Activated T-helper 1 cell treated with anti-CD3 and anti-CD28 coated beads, Interleukin-12 subunit alpha, Interleukin-12 subunit beta, Interleukin-2, Interleukin-4 antibody, amounts not matched to agents 30 ng/mL and 10 ng/mL and 1 ng/mL, durations not matched to agents 14 hours and 24 hours and 36 hours (primary cell): ENCODE measurements at regions of chr18 and their contacts with region 1.

Region 1: DNA sequence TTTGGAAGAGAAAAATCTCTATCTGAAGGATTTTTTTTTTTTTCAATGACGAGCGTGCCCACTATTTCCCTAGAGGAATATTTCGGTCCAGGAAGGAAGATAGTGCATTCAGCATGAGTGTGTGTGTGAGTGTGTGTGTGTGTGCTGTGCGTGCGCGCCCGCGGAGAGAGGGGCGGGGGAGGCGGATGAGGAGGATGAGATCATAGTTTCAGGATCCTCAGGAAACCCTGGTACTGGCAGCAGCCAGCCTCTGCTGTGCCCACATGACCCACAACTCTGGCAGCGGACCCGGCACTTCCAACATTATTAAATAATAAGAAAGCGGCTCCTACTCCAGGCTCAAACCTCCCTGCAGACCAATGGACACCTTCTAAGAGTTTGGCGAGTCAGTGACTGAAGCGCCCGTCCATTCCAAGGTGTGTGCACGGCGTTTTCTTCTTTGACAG is 217.0 kb upstream of the DTNA start:
- DNase-seq: no peak
- H3K4me3 Mint-ChIP-seq: peak overlapping the region; percentile 31
- H3K27ac Mint-ChIP-seq: no peak overlapping the region
- H3K4me1 Mint-ChIP-seq: peaks cover 4% of the 10 kb centered on the region
- H3K27me3 Mint-ChIP-seq: peaks cover 34% of the 10 kb centered on the region

Region 2: GRCh38 chr18:34224423-34225217 is 268.5 kb before region 1 on chr18 and contains the start of gene NOL4:
- intact Hi-C with region 1: loop called (anchors 10 kb)
- DNase-seq: no peak
- H3K4me3 Mint-ChIP-seq: no peak within 1 kb of the TSS
- H3K27ac Mint-ChIP-seq: no peak within 1 kb of the TSS
- H3K4me1 Mint-ChIP-seq: peaks cover 4% of the 10 kb centered on the region
- H3K27me3 Mint-ChIP-seq: peaks cover 35% of the 10 kb centered on the region
- total RNA-seq, gene NOL4: not detected in 2 replicates

Region 3: DNA sequence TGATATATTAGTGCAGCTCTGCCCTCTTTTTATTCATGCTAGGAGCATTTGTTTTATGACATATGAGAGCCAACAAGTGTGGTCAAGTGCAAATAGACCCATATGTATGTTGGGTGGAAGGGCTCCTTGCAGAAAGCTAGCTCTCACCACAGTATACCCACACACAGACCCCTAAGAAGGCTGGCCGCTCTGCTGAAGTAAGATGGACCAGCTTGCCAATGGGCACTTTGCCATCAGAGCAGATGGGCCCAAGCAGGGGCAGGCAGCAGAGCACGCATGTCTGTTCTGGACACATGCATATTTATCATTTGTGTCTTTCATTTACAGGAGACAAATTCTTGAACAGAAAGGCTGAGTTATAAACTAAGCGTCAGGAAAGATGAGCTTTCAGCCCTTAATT is 29.5 kb after region 1 on chr18:
- intact Hi-C with region 1: no loop called
- DNase-seq: no peak
- H3K4me3 Mint-ChIP-seq: no peak overlapping the region
- H3K27ac Mint-ChIP-seq: no peak overlapping the region
- H3K4me1 Mint-ChIP-seq: no peaks in the 10 kb centered on the region
- H3K27me3 Mint-ChIP-seq: no peaks in the 10 kb centered on the region

Region 4: DNA sequence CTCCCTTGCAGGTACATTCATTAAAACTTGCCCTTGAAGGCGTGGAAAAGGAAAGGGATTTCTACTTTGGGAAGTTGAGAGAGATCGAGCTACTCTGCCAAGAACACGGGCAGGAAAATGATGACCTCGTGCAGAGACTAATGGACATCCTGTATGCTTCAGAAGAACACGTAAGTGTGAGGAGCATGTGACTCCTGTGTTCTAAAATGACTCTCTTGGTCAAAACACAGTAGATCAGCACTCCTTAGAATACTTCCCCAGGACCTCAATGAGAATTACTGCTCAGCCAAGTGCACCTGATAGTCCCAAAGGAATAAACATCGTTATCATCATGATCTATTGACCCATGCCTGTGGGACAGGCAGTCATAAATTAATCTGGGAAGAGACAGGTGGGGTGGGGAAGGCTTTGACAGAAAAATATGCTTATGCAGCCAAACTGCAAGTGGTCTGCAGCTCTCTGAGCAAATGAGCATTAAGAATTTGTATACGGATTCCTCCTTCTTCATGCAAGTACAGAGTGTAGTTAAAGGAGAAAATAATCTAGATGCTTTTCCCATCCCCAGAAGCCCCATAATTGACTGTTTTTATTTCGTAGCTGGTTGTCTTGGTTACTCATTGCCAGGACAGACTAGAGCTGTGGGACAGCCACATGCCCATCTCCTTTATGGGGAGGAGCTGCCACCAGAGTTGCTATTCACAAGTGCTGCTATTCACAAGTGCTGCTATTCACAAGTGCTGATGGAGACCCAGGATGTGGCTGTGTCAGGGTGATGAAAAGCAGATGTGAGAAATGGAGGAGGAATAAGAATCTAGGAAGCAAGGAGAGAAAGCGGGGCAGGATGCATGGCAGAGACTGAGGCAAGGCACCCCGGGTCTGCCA is 639.1 kb after region 1 on chr18:
- intact Hi-C with region 1: no loop called
- DNase-seq: no peak
- H3K4me3 Mint-ChIP-seq: no peak overlapping the region
- H3K27ac Mint-ChIP-seq: no peak overlapping the region
- H3K4me1 Mint-ChIP-seq: no peaks in the 10 kb centered on the region
- H3K27me3 Mint-ChIP-seq: no peaks in the 10 kb centered on the region

Region 5: DNA sequence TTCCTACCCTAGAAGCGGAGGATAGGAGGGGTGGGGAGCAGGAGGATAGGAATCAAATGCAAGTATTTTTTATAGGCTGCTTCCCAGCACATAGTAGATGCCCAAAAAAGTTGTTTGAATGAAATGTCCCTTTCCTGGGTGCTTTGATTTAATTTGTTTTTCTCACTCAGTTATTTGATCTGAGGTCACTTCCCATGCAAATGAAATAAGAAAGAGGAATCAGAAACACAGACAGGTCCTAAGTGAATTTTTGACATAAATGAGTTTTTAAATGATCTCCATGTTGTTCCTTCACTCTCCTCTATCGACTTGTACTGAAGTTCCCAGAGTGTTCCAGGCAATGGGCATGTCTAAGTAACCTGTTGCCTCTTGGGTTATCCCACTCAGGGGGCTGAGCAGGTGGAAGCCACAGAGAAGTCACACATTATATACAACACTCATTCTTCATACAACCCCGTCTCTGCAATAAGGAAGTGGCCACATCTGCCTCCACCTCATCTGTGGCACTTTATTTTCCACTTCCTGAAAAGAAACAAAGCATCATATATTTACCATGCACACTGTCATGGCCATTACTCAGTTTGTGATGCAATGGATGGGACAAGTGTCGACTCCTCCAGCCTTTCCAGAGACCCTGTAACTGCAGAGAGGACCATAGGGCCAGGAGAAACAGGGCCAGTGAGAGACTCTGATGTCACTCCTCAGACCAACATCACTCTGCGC is 665.8 kb after region 1 on chr18:
- intact Hi-C with region 1: no loop called
- DNase-seq: peak; percentile 17
- H3K4me3 Mint-ChIP-seq: no peak overlapping the region
- H3K27ac Mint-ChIP-seq: peak overlapping the region; percentile 89
- H3K4me1 Mint-ChIP-seq: peaks cover 29% of the 10 kb centered on the region
- H3K27me3 Mint-ChIP-seq: no peaks in the 10 kb centered on the region